ENCODE measurements at regions of chr10 and their contacts with region 1.

Region 1: DNA sequence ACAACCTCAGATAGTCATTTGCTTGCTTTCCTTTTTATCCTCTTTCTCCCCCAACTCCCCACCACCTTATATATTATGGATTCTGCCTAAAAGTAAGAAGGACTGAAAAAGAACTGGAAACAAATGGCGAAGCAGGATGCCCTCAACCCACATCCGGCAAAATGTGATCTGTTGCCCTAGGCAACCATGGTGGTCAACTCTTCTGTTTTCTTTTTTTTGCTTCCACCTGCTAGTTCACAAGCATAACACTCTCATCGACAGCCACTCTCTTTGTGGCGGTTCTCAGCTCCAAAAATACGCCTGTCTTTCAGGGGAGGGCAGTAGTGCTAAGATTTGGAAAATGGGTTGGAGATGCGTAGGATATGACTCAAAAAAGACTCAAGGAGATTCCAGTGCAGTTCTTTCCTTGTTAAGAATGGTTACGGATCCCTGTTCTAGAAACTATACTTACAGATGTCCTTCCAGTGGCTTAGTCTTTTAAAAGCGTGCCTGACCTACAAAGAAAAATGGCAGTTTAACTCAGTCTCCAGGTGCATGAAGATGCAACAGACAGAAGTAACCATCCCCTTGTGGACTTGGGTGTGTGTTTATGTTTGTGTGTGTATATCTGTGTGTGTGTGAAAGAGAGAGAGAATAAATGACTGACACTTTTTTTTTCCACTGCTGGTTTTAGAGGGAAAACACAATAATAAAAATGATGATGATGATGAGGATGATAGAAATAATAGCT is 10.7 kb downstream of the APBB1IP start:
- DNase-seq: peak; percentile 77
- H3K4me3 Mint-ChIP-seq: peak overlapping the region; percentile 55
- H3K27ac Mint-ChIP-seq: peak overlapping the region; percentile 92
- H3K4me1 Mint-ChIP-seq: peaks cover 71% of the 10 kb centered on the region
- H3K27me3 Mint-ChIP-seq: no peaks in the 10 kb centered on the region

Region 2: DNA sequence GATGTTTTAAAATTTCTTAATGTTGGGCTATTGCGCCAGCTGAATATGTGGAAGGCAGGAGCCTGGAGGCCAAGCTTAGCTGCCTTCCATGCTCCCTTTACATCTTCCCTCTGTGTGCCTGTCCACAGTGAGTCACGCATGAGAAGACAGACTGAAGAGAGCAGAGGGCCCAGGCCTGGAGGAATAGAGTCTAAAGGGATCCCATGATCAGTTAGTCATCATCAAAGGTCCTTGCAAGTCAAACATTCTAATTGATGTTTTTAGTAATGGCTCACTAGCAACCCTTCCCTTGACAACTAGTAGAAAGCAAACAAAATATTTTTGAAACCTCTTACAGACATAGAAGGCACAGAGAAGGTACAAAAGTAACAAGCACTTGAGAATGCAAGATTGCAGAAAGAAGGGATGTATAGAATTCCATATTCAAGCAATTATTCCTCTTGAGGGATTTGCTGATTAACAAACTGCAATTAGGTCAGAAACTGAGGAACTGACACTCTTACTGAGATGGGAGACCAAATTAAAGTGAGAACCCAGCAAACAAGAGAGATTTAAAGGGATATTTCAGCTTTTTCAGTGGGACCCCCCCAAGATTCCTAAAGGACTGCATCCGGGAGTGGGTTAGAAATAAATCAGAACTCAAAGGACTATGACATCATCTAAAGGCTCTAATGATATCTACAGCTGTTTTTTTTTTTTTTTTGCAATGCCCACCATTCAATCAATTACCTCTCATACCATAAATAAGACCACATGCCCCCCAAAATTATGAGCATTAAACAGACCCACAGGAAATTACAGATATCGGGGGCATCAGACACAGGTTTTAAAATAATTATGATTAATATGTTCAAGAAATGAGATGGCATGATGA is 41.2 kb before region 1 on chr10:
- intact Hi-C with region 1: no loop called
- DNase-seq: no peak
- H3K4me3 Mint-ChIP-seq: no peak overlapping the region
- H3K27ac Mint-ChIP-seq: no peak overlapping the region
- H3K4me1 Mint-ChIP-seq: no peaks in the 10 kb centered on the region
- H3K27me3 Mint-ChIP-seq: peaks cover 29% of the 10 kb centered on the region

Region 3: GRCh38 chr10:26430641-26431164 is 18.2 kb before region 1 on chr10:
- intact Hi-C with region 1: loop called (anchors 1 kb)
- DNase-seq: no peak
- H3K4me3 Mint-ChIP-seq: no peak overlapping the region
- H3K27ac Mint-ChIP-seq: peak overlapping the region; percentile 86
- H3K4me1 Mint-ChIP-seq: peaks cover 15% of the 10 kb centered on the region
- H3K27me3 Mint-ChIP-seq: no peaks in the 10 kb centered on the region

Region 4: GRCh38 chr10:26437637-26438461 is 11.0 kb before region 1 on chr10 and contains the start of gene APBB1IP:
- intact Hi-C with region 1: loop called (anchors 1 kb)
- DNase-seq: peak; percentile 52
- H3K4me3 Mint-ChIP-seq: peak within 1 kb of the TSS; percentile 92
- H3K27ac Mint-ChIP-seq: peak within 1 kb of the TSS; percentile 90
- H3K4me1 Mint-ChIP-seq: peaks cover 39% of the 10 kb centered on the region
- H3K27me3 Mint-ChIP-seq: no peaks in the 10 kb centered on the region
- total RNA-seq, gene APBB1IP: 45.2 and 47.4 TPM in 2 replicates

Region 5: DNA sequence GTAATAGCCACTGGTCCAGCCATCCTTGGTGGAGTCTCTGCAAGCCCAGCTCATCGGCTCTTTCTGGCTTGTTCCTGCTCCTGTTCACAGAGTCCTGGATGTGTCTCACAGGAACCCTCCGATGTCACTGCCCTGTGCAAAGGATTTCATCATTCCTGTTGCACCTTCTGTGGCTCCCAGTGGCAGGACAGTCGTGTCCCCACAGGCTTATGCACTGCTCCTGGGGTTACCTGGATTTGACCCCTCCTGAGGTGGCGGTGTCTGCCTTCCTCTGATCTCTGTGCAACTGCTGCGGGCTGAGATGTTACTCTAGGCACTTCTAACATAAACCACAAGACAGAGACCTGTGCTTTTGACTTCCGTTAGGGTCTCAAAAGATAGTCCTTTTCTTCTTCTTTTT is 19.8 kb after region 1 on chr10:
- intact Hi-C with region 1: loop called (anchors 2 kb)
- DNase-seq: peak; percentile 32
- H3K4me3 Mint-ChIP-seq: peak overlapping the region; percentile 53
- H3K27ac Mint-ChIP-seq: peak overlapping the region; percentile 56
- H3K4me1 Mint-ChIP-seq: peaks cover 56% of the 10 kb centered on the region
- H3K27me3 Mint-ChIP-seq: no peaks in the 10 kb centered on the region

Region 6: DNA sequence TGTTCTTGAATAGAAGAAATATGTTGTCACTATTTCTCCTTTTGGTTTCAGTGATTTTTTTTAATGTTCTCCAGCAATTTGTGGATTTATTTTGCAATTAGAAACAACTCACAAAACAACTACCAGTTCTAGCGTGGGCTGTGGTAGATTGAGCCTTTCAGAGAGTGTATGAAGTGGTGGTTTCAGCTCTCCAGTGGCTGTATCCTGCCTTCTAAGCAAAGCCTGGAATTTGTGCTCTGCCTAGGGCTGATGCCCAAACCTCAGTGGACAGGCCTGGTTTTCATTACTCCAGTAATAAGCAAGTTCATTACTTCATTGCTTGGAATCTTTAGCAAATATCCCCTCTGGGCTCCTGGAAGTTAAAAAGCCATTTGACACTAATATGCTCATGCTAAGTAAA is 25.2 kb after region 1 on chr10:
- intact Hi-C with region 1: loop called (anchors 2 kb)
- DNase-seq: no peak
- H3K4me3 Mint-ChIP-seq: no peak overlapping the region
- H3K27ac Mint-ChIP-seq: no peak overlapping the region
- H3K4me1 Mint-ChIP-seq: peaks cover 69% of the 10 kb centered on the region
- H3K27me3 Mint-ChIP-seq: no peaks in the 10 kb centered on the region

Region 7: DNA sequence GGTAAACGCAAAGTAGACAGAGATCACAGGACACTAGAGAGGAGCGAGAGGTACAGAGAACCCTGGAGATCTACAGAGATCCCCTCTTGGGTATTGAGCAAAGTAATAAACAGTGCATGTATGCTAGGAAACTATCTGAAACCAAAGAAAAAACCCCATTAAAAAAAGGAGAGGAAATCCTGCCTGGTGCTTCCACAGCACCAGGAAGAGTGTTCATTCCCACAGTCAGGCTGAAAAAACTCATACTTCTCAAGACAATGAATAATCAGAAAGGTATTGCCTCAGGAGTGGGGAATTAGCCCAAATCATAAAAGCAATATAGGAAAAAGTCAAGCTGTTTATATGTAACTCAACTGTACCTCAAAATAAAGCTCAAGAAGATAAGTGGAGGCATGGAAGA is 592.3 kb after region 1 on chr10:
- intact Hi-C with region 1: no loop called
- DNase-seq: no peak
- H3K4me3 Mint-ChIP-seq: no peak overlapping the region
- H3K27ac Mint-ChIP-seq: no peak overlapping the region
- H3K4me1 Mint-ChIP-seq: no peaks in the 10 kb centered on the region
- H3K27me3 Mint-ChIP-seq: no peaks in the 10 kb centered on the region

Region 8: GRCh38 chr10:28334296-28334695 is 1885.4 kb after region 1 on chr10:
- intact Hi-C with region 1: loop called (anchors 10 kb)
- DNase-seq: peak; percentile 58
- H3K4me3 Mint-ChIP-seq: peak overlapping the region; percentile 79
- H3K27ac Mint-ChIP-seq: peak overlapping the region; percentile 98
- H3K4me1 Mint-ChIP-seq: peaks cover 49% of the 10 kb centered on the region
- H3K27me3 Mint-ChIP-seq: peaks cover 2% of the 10 kb centered on the region

Measured in activated T-helper 2 cell treated with anti-CD3 and anti-CD28 coated beads, Interferon-gamma antibody, Interleukin-2, Interleukin-4, amounts not matched to agents 10 μg/mL and 5 μg/mL and 100 μg/mL, durations not matched to agents 14 hours and 24 hours and 36 hours (primary cell).